ENCODE measurements at regions of chr10 and their contacts with region 1.

Region 1: GRCh38 chr10:114631666-114632417 is 26.2 kb downstream of the ABLIM1 start:
- DNase-seq: no peak

Region 2: GRCh38 chr10:114603948-114604347 is 27.9 kb before region 1 on chr10:
- intact Hi-C with region 1: loop called (anchors 1 kb)
- DNase-seq: no peak

Region 3: DNA sequence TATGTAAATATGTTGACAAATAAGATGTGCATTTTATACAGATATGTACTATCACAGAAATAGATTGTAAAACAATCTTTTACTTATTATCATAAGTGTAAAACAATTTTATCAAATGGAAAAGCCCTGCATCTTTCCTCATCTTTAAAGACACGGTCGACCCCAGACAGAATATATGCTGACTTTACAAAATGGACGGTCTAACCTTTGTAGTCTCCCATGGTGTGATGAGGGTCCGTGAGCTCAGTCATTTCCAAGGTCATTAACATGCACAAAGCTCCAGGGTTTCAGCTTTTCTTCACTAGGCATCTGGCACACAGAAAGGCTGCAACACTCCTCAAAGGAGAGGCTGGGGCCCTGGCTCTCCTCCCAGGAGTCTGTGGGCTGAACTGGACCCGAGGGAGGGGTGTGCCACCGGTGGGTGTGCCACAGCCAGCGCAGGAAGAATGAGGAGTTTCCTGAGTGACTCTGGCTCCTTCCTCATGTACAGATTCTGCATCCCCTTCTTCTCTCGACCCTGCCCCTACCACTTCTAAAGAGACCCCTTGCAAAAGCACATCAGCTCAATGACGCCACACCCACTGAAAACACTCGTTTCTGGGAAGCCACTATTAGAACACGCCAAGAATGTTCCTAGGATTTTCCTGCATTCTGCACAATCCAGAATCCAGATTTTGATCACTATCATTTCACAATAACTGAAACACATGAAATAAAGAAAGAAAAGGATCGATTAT is 52.4 kb after region 1 on chr10:
- intact Hi-C with region 1: loop called (anchors 1 kb)
- DNase-seq: peak; percentile 84

Region 4: GRCh38 chr10:114714281-114714741 is 82.5 kb after region 1 on chr10:
- intact Hi-C with region 1: no loop called
- DNase-seq: no peak

Region 5: DNA sequence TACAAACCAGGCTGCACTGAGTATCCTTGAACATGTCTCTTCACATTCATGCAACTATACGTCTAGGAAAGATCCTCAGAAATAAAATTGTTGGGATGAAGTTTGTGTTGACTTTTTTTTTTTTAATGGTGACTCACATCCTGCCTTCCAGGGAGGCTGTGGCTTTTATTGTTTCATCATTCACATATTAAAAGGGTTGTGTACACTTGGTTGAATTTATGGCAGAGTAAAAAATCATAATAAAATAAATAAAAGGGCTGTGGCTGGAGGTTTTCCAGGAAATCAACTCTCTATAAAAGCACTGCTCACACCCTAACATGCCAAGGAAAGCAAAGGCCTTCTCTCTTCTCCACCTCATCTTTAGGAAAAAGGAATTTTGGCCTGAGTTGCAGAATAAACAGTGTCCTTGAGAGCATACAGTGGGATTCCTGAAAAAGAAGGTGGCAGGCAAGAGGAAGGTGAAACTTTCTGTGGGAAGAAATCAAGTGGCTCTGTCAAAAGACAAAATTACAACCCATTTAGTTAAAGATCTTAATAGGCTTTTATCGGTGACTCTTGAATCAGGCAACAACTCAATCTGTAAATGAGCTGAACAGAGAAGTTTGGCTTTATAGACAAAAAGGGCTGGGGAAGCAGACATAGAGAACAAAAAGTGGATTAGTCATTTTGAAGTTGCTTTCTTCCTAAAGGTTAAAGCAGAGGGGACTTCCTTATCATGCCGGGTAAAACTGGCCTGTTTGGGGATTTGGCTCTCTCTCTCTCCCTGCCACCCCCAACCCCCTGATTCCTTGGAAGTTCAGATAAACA is 148.2 kb after region 1 on chr10:
- intact Hi-C with region 1: loop called (anchors 10 kb)
- DNase-seq: no peak

Region 6: GRCh38 chr10:114821293-114821914 is 189.6 kb after region 1 on chr10 and contains the start of gene FHIP2A:
- intact Hi-C with region 1: loop called (anchors 5 kb)
- DNase-seq: peak; percentile 93
- total RNA-seq, gene FHIP2A: 26.5 TPM

Measured in cardiac septum (tissue), 1 donor.